ENCODE measurements at regions of chr6 and their contacts with region 1.

Region 1: DNA sequence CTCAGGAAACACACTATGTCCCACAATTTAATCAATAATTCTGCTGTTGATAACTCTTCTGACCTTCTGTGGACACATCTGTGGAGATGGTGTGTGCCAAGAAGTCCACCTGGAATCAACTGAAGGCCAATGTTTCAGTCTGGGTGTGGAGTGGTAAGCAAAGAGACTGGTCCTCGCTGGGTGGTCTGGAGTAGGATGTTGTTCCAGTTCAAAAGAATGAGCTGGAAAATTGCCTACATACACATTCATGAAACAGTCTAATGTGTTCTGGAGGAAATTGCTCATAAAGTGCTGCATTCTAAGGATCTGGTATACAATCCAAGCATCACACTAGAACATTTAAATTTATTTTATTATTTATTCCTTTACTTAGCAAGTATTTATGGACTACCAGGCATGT is 33.9 kb upstream of the TBX18 start:
- DNase-seq: peak; percentile 94
- H3K4me3 ChIP-seq: no peak overlapping the region
- H3K27ac ChIP-seq: no peak overlapping the region
- H3K4me1 ChIP-seq: peaks cover 22% of the 10 kb centered on the region
- H3K27me3 ChIP-seq: no peaks in the 10 kb centered on the region
- CTCF ChIP-seq: no peak
- POLR2A ChIP-seq: no peak

Region 2: DNA sequence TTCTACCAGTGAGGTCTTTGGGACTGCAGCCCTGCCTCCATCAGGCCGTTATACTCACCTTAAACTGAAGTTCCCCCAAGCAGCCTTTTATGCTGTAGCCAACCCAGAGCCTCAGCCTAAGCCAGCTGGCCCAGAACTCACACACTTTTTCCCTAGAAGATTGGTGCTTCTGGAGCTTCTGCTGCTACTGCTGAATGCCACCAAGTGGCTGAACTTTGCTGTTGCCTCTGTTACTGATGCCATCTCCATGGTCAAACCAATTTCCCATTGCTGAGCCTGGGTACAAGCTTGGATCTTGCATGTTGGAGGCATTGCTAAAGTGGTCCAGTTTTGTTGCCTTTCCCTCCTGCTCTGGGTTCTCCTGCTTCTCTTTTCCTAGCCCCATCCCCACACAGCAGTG is 18.9 kb before region 1 on chr6:
- CTCF ChIA-PET with region 1: interaction called, 25 read pairs
- POLR2A ChIA-PET with region 1: no interaction called
- dilution Hi-C with region 1: no loop called
- intact Hi-C with region 1: loop called (anchors 1 kb)
- DNase-seq: no peak
- H3K4me3 ChIP-seq: no peak overlapping the region
- H3K27ac ChIP-seq: no peak overlapping the region
- H3K4me1 ChIP-seq: peaks cover 3% of the 10 kb centered on the region
- H3K27me3 ChIP-seq: peaks cover 9 to 44% of the 10 kb centered on the region in 2 experiments
- CTCF ChIP-seq: peak; percentile 21 to 46
- POLR2A ChIP-seq: no peak

Region 3: DNA sequence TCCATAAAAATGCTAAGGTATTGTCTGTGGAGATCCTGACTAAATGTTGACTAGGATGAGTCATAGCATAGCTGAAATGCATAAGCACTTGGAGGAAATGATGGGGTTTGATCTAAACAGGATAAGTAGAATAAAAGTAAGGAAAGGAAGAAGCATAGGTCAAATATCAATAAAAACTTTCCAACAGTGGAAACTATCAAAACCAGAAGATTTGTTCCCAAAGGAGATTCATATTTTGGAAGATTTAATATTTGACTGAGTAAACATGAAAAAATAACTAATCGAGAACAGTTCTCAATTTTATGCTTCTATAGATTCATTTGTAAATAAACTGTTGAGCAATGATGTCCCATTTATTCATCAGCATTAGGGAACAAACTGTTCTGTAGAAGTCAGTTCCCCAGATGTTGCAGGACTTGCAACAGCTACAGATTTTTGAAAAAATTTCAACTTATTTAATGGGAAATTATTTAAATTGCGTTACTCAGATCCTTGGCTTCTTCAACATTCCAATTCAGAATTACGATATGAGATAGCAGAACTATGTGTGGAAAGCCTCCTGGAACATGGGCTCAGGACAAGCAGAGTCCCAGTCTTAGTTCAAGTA is 99.8 kb after region 1 on chr6:
- CTCF ChIA-PET with region 1: no interaction called
- POLR2A ChIA-PET with region 1: no interaction called
- dilution Hi-C with region 1: no loop called
- intact Hi-C with region 1: loop called (anchors 2 kb)
- DNase-seq: peak; percentile 87
- H3K4me3 ChIP-seq: no peak overlapping the region
- H3K27ac ChIP-seq: peak overlapping the region; percentile 71
- H3K4me1 ChIP-seq: peaks cover 21% of the 10 kb centered on the region
- H3K27me3 ChIP-seq: no peaks in the 10 kb centered on the region
- CTCF ChIP-seq: no peak
- POLR2A ChIP-seq: no peak

Measured in endothelial cell of umbilical vein (primary cell).